Panc1 (cell line): ENCODE measurements at regions of chr5 and their contacts with region 1.

Region 1: GRCh38 chr5:127030259-127031146 is at the start of gene MARCHF3:
- DNase-seq: peak; percentile 67
- ATAC-seq: peak; percentile 99
- H3K4me3 ChIP-seq: peak within 1 kb of the TSS; percentile 68 to 82
- H3K27ac ChIP-seq: peak within 1 kb of the TSS; percentile 54; the same call in 1 of the 2 replicates
- H3K4me1 ChIP-seq: no peaks in the 10 kb centered on the region; the same call in 1 of the 2 replicates
- H3K27me3 ChIP-seq: no peaks in the 10 kb centered on the region; the same call in 1 of the 2 replicates
- CTCF ChIP-seq: peak; percentile 49
- total RNA-seq, gene MARCHF3: 3.0 TPM

Region 2: DNA sequence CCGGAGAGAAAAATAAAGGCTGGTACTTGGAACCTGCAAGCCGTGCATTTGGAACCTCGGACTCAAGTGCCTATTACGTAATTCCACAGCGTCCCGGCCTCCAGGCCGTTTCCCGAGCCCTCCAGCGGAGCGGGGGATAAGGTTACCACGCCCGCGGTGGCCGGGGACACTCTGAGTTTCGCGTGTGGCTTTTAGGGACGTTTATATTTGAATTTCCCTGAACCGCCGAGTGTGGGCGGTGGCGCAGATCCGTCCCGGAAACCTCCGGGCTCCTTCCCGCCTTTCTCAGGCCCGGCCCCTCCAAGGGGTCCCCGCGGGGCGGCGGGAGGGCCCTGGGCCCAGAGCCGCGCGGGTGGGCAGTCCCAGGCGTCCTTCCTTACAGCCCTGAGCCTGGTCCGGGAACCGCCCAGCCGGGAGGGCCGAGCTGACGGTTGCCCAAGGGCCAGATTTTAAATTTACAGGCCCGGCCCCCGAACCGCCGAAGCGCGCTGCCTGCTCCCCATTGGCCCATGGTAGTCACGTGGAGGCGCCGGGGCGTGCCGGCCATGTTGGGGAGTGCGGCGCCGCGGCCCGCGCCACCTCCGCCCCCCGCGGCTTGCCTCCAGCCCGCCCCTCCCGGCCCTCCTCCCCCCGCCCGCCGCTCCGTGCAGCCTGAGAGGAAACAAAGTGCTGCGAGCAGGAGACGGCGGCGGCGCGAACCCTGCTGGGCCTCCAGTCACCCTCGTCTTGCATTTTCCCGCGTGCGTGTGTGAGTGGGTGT is 253.8 kb before region 1 on chr5 and contains the start of gene LMNB1:
- CTCF ChIA-PET with region 1: no interaction called
- POLR2A ChIA-PET with region 1: no interaction called
- in situ Hi-C with region 1: no loop called
- intact Hi-C with region 1: no loop called
- DNase-seq: peak; percentile 76
- ATAC-seq: peak; percentile 91
- H3K4me3 ChIP-seq: peak within 1 kb of the TSS; percentile 90 to 93
- H3K27ac ChIP-seq: peak within 1 kb of the TSS; percentile 99
- H3K4me1 ChIP-seq: peaks cover 11% of the 10 kb centered on the region; the same call in 1 of the 2 replicates
- H3K27me3 ChIP-seq: no peaks in the 10 kb centered on the region
- CTCF ChIP-seq: no peak
- total RNA-seq, gene LMNB1: 122 TPM

Region 3: DNA sequence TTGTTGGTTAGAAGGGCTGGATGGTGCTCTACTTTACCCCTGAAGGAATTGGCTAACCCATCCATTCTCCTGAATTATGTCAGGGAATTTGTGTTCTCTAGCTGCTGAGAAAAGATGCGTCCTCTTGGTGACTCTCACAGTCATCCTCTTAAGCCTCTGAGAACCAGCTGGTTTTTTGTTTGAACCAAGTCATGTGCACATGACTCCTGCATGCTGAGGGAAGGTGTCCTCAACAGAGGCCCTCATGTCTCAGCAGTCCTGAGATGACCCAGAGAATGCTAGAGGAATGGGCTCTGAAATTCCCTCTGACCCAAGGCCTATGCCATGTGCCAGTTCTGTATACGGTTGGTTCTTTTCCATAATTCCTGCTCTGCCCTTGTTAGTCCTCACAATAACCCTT is 53.2 kb after region 1 on chr5:
- CTCF ChIA-PET with region 1: no interaction called
- POLR2A ChIA-PET with region 1: interaction called, 10 read pairs
- in situ Hi-C with region 1: no loop called
- intact Hi-C with region 1: no loop called
- DNase-seq: no peak
- ATAC-seq: no peak
- H3K4me3 ChIP-seq: no peak overlapping the region
- H3K27ac ChIP-seq: no peak overlapping the region
- H3K4me1 ChIP-seq: no peaks in the 10 kb centered on the region
- H3K27me3 ChIP-seq: no peaks in the 10 kb centered on the region
- CTCF ChIP-seq: no peak